OCI-LY7 (cell line): ENCODE measurements at regions of chr1 and their contacts with region 1.

Region 1: DNA sequence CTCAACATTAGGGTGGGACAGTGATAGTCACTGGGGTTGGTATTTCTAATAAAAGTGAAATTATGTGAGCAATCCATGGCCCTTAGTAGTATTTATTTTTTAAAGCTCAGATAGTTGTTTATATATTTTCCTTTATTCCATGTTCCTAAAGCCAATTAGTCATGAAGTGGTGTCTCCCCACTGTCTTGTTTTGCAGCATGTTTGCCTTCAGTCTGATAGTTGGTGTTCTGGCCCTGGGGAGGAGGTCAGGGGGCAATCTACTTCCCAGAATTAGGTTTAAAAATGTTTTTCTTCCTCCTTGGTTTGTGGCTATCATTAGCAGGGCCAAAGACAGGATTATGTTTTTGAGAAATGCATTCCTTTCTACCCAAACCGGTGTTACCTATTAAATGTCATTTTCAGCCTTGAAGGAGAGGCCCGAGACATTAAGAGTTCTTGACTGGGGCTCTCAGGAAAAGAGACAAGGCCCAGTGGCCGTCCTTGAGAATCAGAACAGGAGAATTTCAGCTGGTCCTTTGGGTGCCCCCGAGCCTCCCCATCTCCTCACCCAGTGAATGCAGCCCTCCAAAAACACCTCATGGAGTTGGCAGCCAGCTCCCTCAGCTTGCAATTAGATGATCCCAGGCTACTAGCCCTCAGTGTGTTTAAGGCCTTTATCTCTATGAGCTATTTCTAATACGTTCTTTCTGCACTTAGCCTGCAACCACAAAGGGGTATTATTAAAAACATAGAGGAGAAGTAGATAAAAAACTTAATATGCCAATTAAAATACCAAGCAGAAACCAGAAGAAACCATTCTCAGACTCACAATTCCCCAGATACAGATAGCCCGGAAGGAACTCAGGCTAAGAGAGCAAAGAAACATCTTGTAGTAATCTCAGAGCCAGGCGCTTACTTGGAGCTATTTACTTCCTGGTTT is 71.3 kb upstream of the NGF start:
- DNase-seq: no peak
- H3K4me3 ChIP-seq: no peak overlapping the region
- H3K27ac ChIP-seq: no peak overlapping the region
- H3K4me1 ChIP-seq: no peaks in the 10 kb centered on the region
- CTCF ChIP-seq: no peak

Region 2: DNA sequence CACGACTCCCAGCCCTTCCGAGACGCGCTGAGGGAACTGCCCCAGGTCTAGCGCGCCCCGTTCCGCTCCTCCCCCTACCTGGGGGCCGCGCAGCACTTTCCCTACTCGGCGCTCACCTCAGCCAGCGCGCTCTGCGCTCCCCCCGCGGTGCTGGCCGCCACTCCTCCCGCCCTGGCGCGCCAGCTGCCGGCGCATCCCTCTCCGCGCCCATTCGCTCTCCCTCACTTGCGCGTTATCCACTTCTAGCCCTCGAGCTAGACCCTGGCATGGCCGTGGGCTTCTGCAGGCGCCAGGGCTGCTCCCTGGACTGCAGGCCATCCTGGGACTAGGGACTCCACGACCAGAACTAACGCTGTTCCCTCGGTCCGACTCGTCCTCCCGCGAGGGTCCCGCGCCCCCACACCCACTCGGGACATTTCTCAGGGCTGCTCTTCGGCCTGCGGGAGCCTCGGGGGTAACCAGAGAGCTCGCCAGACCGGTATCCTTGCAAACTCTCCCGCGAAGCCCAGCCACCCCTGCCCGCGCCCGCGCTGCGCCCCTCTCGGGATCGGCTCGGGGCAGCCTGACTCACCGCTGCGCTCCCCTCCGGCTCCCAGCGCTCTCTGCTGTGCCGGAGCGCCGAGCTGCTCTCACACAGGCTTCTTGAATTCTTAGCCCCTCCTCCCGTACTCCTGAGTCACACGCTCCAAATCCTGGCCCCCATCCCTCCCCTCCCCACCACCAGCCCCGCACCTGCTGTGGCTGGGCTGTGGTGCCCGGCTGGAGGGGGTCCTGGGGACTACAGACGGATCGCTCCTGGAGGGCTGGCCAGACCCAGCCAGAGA is 71.5 kb before region 1 on chr1 and contains the start of gene NGF:
- CTCF ChIA-PET with region 1: no interaction called
- POLR2A ChIA-PET with region 1: no interaction called
- intact Hi-C with region 1: no loop called
- DNase-seq: no peak
- H3K4me3 ChIP-seq: no peak within 1 kb of the TSS
- H3K27ac ChIP-seq: no peak within 1 kb of the TSS
- H3K4me1 ChIP-seq: peaks cover 20% of the 10 kb centered on the region
- CTCF ChIP-seq: no peak
- total RNA-seq, gene NGF: not detected in 2 replicates

Region 3: DNA sequence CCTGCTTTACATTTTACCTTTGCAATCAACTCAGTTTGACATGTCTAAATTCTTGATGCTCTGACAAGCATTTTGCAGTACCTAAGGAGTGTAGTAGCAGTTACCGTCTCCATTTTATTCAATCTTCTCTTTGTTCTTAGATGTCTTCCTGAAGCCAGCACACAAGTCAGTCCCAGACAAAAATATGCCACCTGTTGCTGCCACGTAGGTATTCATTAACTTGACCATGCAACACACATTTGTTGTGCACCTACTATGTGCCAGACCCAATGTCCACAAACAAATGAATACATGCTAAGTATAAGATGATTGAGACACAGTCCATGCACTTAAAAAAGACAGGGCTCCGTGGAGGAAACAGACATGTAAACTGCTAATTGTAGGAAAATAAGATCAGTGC is 10.2 kb after region 1 on chr1:
- CTCF ChIA-PET with region 1: no interaction called
- POLR2A ChIA-PET with region 1: interaction called, 10 read pairs
- intact Hi-C with region 1: no loop called
- DNase-seq: no peak
- H3K4me3 ChIP-seq: no peak overlapping the region
- H3K27ac ChIP-seq: no peak overlapping the region
- H3K4me1 ChIP-seq: no peaks in the 10 kb centered on the region
- CTCF ChIP-seq: no peak